ENCODE measurements at regions of chr6 and their contacts with region 1.

Region 1: GRCh38 chr6:158686791-158687381 is 37.0 kb downstream of the SYTL3 start:
- DNase-seq: peak; percentile 47
- H3K4me3 Mint-ChIP-seq: no peak overlapping the region
- H3K27ac Mint-ChIP-seq: peak overlapping the region; percentile 73
- H3K4me1 Mint-ChIP-seq: peaks cover 58% of the 10 kb centered on the region
- H3K27me3 Mint-ChIP-seq: no peaks in the 10 kb centered on the region

Region 2: GRCh38 chr6:158213925-158214674 is 472.8 kb before region 1 on chr6:
- CTCF ChIA-PET with region 1: interaction called, 29 read pairs
- POLR2A ChIA-PET with region 1: no interaction called
- DNase-seq: peak; percentile 61
- H3K4me3 Mint-ChIP-seq: no peak overlapping the region
- H3K27ac Mint-ChIP-seq: no peak overlapping the region
- H3K4me1 Mint-ChIP-seq: peaks cover 21% of the 10 kb centered on the region
- H3K27me3 Mint-ChIP-seq: peaks cover 2% of the 10 kb centered on the region

Region 3: GRCh38 chr6:158353883-158354877 is 332.7 kb before region 1 on chr6:
- CTCF ChIA-PET with region 1: no interaction called
- POLR2A ChIA-PET with region 1: no interaction called
- DNase-seq: no peak
- H3K4me3 Mint-ChIP-seq: no peak overlapping the region
- H3K27ac Mint-ChIP-seq: no peak overlapping the region
- H3K4me1 Mint-ChIP-seq: peaks cover 32% of the 10 kb centered on the region
- H3K27me3 Mint-ChIP-seq: no peaks in the 10 kb centered on the region

Region 4: DNA sequence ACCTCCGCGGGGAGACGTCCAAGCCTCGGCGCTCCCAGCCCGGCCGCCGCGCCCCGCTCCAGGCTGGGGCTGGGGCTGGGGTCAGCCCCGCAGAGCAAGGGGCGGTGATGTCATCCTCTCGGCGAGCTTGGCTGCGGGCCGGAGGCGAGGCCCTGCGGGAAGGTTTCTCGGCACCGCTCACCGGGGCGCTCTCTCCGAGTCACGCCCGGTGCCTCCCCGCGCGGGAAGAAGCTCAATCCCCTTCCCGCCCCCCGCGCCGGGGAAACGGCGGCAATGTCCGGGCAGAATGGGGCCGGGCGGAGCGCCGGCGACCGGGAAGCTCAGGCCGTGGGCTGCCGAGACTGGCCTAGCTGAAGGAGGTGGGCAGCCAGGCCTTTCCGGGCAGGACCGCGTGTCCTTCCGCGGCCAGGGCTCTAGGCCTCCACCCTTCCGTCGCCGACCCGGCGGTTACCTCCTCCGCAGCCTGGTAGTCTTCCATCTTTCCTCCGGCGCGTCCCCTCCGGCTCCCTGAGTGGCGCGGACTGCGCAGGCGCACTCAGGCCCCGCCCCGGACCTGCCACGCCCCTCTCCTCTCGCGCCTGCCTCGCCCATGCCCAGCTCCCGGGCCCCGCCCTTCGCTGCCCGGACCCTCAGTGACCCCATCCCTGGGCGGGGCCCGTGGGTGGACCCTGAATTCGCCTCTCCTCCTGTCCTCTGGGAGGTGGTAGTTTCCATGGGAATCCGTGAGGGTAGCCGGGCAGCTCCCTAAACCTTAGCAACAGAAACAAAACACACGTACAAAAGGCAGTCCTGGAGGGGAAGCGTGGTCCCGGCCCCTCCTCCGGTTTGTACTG is 42.4 kb before region 1 on chr6 and contains the start of gene DYNLT1:
- CTCF ChIA-PET with region 1: interaction called, 42 read pairs
- POLR2A ChIA-PET with region 1: interaction called, 16 read pairs
- DNase-seq: peak; percentile 92
- H3K4me3 Mint-ChIP-seq: peak within 1 kb of the TSS; percentile 100
- H3K27ac Mint-ChIP-seq: peak within 1 kb of the TSS; percentile 97
- H3K4me1 Mint-ChIP-seq: peaks cover 75% of the 10 kb centered on the region
- H3K27me3 Mint-ChIP-seq: no peaks in the 10 kb centered on the region
- total RNA-seq, gene DYNLT1: 130 to 133 TPM

Region 5: GRCh38 chr6:158649289-158650143 is 37.4 kb before region 1 on chr6 and contains the start of gene SYTL3:
- CTCF ChIA-PET with region 1: interaction called, 42 read pairs
- POLR2A ChIA-PET with region 1: interaction called, 16 read pairs
- DNase-seq: peak; percentile 82
- H3K4me3 Mint-ChIP-seq: peak within 1 kb of the TSS; percentile 73
- H3K27ac Mint-ChIP-seq: peak within 1 kb of the TSS; percentile 90
- H3K4me1 Mint-ChIP-seq: peaks cover 76% of the 10 kb centered on the region
- H3K27me3 Mint-ChIP-seq: no peaks in the 10 kb centered on the region
- total RNA-seq, gene SYTL3: 133 to 135 TPM

Region 6: GRCh38 chr6:158660333-158660754 is 26.5 kb before region 1 on chr6:
- CTCF ChIA-PET with region 1: interaction called, 83 read pairs
- POLR2A ChIA-PET with region 1: interaction called, 5 read pairs
- DNase-seq: peak; percentile 54
- H3K4me3 Mint-ChIP-seq: no peak overlapping the region
- H3K27ac Mint-ChIP-seq: no peak overlapping the region
- H3K4me1 Mint-ChIP-seq: peaks cover 46% of the 10 kb centered on the region
- H3K27me3 Mint-ChIP-seq: no peaks in the 10 kb centered on the region

Region 7: DNA sequence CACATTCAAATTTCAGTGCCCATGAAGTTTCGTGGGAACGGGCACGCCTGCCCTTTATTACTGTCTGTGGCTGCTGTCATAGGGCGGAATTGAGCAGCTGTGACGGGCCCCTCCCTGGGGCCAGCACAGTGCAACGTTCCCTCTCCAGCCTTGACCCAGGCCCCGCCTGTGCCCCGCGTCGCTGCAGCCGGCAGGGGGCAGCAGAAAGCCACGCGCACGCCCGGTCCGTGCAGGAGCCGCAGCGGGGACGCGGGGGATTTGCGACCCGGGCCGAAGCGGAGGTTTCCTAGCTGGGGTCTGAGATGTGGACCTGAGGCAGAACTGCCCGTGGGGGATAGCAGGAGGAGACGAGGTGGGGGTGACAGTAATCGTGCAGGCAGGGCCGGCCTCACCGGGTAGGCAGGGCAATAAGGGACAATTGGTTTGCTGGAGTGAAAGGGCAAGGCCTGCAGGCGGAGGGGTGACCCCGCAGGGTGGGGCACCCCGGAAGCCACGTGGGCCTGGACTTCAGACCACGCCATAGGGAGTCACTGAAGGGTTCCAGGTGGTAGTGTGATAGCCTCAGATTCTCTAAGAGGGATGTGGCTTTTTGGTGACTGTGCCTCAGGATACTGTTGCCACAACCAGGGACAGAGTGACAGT is 17.4 kb after region 1 on chr6:
- CTCF ChIA-PET with region 1: interaction called, 23 read pairs
- POLR2A ChIA-PET with region 1: no interaction called
- DNase-seq: peak; percentile 79
- H3K4me3 Mint-ChIP-seq: peak overlapping the region; percentile 59
- H3K27ac Mint-ChIP-seq: peak overlapping the region; percentile 68
- H3K4me1 Mint-ChIP-seq: peaks cover 27% of the 10 kb centered on the region
- H3K27me3 Mint-ChIP-seq: no peaks in the 10 kb centered on the region

Region 8: DNA sequence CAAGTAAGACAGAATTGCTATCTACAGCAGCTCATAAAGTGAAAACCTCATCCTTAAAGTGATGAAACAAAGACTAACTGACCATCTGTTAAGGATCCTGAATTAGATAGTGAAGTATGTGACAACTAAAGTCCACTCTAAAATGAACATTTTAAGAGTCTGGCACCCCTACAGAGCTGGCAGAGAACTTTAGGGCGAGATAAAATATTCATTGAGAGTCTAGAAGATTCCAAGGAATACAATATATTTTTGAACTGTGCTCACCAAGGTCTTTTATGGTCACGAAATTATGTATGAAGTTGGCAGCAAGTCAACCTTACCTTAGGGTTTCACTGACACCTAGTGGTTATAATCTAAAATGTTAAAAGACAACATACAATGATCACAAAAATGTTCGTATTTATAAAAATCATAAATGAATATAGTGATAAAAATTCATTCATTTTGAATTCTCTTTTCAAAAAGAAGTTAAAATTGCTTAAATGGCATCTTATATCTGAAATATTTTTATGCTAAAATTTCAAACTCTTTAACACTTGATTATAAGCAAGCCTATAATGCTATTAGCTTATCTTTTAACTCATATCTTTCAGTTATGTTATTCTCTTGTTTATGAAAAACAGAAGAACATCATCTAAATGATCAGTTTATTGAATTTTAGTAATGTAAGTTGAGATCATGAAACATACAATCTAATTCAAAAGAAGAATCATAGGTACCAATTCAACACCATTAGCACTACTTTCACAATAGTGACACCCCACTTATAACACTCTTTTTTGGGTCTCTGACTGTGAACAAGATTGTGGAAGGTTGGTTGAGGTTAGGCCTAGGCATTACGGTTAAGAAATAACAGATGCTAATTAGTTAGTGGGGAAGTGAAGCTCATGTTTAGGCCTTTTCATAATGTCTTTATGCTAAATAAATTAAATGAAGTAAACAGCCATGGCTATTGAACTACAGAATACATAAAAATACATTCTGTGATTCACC is 285.7 kb after region 1 on chr6:
- CTCF ChIA-PET with region 1: interaction called, 14 read pairs
- POLR2A ChIA-PET with region 1: no interaction called
- DNase-seq: no peak
- H3K4me3 Mint-ChIP-seq: no peak overlapping the region
- H3K27ac Mint-ChIP-seq: no peak overlapping the region
- H3K4me1 Mint-ChIP-seq: peaks cover 2% of the 10 kb centered on the region
- H3K27me3 Mint-ChIP-seq: peaks cover 1% of the 10 kb centered on the region